Activated CD8-positive, alpha-beta T cell treated with anti-CD3 and anti-CD28 coated beads, Interleukin-2, amount 10 ng/mL, durations not matched to agents 7 days and 5 days (primary cell): ENCODE measurements at regions of chr6 and their contacts with region 1.

Region 1: GRCh38 chr6:145814501-145815308 is at the start of gene FBXO30:
- DNase-seq: peak; percentile 87
- ATAC-seq: peak; percentile 92
- H3K4me3 Mint-ChIP-seq: peak within 1 kb of the TSS; percentile 94
- H3K27ac Mint-ChIP-seq: peak within 1 kb of the TSS; percentile 94
- H3K4me1 Mint-ChIP-seq: peaks cover 21% of the 10 kb centered on the region
- H3K27me3 Mint-ChIP-seq: no peaks in the 10 kb centered on the region
- total RNA-seq, gene FBXO30: 3.5 to 4.1 TPM

Region 2: DNA sequence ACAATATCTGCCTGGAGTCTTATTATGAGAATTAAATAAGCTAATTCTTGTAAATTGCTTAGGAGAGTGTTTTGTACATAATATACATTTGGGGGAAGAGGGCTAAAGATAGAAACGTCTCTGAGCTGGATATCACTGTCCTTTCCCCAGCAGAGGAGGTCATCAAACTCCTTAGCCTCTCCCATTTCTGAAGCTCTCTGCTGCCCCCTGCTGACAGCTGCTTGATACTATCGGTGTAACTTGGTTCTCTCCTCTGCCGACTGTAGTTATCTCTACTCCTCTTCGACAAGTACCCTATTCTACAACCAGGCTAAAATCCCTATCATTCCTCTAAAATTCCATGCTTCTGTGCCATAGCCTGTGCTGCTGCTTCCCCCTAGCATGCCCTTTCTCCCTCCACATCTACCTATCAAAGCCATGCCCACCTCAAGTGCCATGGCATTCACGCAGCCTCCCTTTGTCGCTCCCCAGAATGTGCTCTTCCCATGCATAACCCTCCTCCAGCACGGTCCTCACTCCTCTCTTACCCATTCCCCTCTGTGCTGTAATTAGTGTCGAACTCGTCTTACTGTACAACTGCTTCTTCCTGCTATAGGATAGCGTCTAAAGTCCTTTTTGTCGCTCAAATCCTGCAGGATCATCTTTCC is 180.6 kb before region 1 on chr6:
- CTCF ChIA-PET with region 1: no interaction called
- POLR2A ChIA-PET with region 1: no interaction called
- DNase-seq: peak; percentile 85
- ATAC-seq: peak; percentile 85
- H3K4me3 Mint-ChIP-seq: no peak overlapping the region
- H3K27ac Mint-ChIP-seq: no peak overlapping the region
- H3K4me1 Mint-ChIP-seq: no peaks in the 10 kb centered on the region
- H3K27me3 Mint-ChIP-seq: no peaks in the 10 kb centered on the region

Region 3: DNA sequence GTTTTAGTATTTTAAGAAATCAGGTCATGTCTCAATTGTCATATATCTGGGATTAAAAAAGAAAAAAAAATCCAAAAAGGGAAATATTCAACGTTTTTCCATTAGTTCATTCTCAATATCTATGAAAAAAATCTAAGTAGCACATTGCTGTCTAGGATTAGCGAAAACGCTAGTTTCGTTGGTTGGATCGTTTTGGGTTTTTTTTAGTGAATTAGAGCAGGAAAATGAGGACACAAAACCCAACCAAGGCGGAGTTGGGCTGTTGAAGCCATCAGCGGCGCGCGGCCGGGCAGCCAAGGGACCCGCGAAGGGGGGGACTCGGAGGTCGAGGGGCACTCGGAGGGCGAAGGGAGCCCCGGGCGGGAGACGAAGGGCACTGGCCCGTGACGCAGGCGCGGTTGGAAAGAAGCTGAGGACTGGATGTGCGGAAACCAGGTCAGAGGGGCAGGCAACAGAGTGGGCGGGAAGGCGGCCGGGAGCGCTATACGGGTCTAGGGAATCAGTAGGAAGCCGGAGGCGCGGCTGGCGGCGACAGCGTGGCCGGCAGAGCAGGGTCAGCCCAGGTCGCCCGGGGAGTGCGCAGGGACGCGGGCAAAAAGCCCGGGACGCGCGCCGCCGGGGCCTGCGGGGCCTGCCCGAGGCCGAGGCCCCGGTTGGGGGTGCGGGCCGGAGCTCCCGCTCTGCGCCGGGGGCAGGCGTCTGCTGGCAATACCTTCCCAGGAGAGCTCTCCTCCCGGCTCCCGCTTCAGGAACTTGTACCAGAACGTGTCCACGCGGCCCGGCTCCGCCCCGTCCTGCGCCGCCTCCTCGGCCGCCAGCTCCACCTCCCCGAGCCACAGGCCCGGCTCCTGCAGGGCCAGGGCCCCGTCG is 80.0 kb before region 1 on chr6:
- CTCF ChIA-PET with region 1: interaction called, 9 read pairs
- POLR2A ChIA-PET with region 1: interaction called, 46 read pairs
- DNase-seq: peak; percentile 77
- ATAC-seq: peak; percentile 84
- H3K4me3 Mint-ChIP-seq: peak overlapping the region; percentile 85
- H3K27ac Mint-ChIP-seq: peak overlapping the region; percentile 93
- H3K4me1 Mint-ChIP-seq: peaks cover 26% of the 10 kb centered on the region
- H3K27me3 Mint-ChIP-seq: no peaks in the 10 kb centered on the region

Region 4: GRCh38 chr6:145798530-145798929 is 16.2 kb before region 1 on chr6:
- CTCF ChIA-PET with region 1: no interaction called
- POLR2A ChIA-PET with region 1: no interaction called
- DNase-seq: no peak
- ATAC-seq: no peak
- H3K4me3 Mint-ChIP-seq: no peak overlapping the region
- H3K27ac Mint-ChIP-seq: no peak overlapping the region
- H3K4me1 Mint-ChIP-seq: no peaks in the 10 kb centered on the region
- H3K27me3 Mint-ChIP-seq: no peaks in the 10 kb centered on the region

Region 5: GRCh38 chr6:145866456-145867396 is 52.0 kb after region 1 on chr6:
- CTCF ChIA-PET with region 1: interaction called, 5 read pairs
- POLR2A ChIA-PET with region 1: interaction called, 11 read pairs
- DNase-seq: no peak
- ATAC-seq: peak; percentile 38
- H3K4me3 Mint-ChIP-seq: peak overlapping the region; percentile 38
- H3K27ac Mint-ChIP-seq: peak overlapping the region; percentile 34
- H3K4me1 Mint-ChIP-seq: peaks cover 27% of the 10 kb centered on the region
- H3K27me3 Mint-ChIP-seq: no peaks in the 10 kb centered on the region

Region 6: GRCh38 chr6:145963216-145964068 is 148.7 kb after region 1 on chr6:
- CTCF ChIA-PET with region 1: interaction called, 4 read pairs
- POLR2A ChIA-PET with region 1: interaction called, 19 read pairs
- DNase-seq: peak; percentile 51
- ATAC-seq: peak; percentile 51
- H3K4me3 Mint-ChIP-seq: peak overlapping the region; percentile 97
- H3K27ac Mint-ChIP-seq: peak overlapping the region; percentile 93
- H3K4me1 Mint-ChIP-seq: peaks cover 28% of the 10 kb centered on the region
- H3K27me3 Mint-ChIP-seq: no peaks in the 10 kb centered on the region